GM12878 (cell line): ENCODE measurements at regions of chr5 and their contacts with region 1.

Region 1: GRCh38 chr5:141691867-141692532 is 10.0 kb upstream of the ARAP3 start:
- DNase-seq: no peak
- ATAC-seq: peak; percentile 97
- H3K4me3 ChIP-seq: no peak overlapping the region
- H3K27ac ChIP-seq: no peak overlapping the region
- H3K4me1 ChIP-seq: peaks cover 6% of the 10 kb centered on the region
- H3K27me3 ChIP-seq: peaks cover 0 to 5% of the 10 kb centered on the region in 2 experiments; a peak in 3 of 4 replicates
- CTCF ChIP-seq: peak; percentile 96 to 98 (median 97)
- EP300 ChIP-seq: no peak
- POLR2A ChIP-seq: no peak
- RAD21 ChIP-seq: peak; percentile 86

Region 2: GRCh38 chr5:141001854-141002604 is 690.0 kb before region 1 on chr5:
- CTCF ChIA-PET with region 1: no interaction called
- POLR2A ChIA-PET with region 1: no interaction called
- RAD21 ChIA-PET with region 1: no interaction called
- SMC1A ChIA-PET with region 1: no interaction called
- in situ Hi-C with region 1: no loop called
- intact Hi-C with region 1: no loop called
- DNase-seq: no peak
- ATAC-seq: no peak
- H3K4me3 ChIP-seq: no peak overlapping the region
- H3K27ac ChIP-seq: no peak overlapping the region
- H3K4me1 ChIP-seq: no peaks in the 10 kb centered on the region
- H3K27me3 ChIP-seq: no peaks in the 10 kb centered on the region
- CTCF ChIP-seq: no peak
- EP300 ChIP-seq: no peak
- POLR2A ChIP-seq: no peak
- RAD21 ChIP-seq: no peak

Region 3: DNA sequence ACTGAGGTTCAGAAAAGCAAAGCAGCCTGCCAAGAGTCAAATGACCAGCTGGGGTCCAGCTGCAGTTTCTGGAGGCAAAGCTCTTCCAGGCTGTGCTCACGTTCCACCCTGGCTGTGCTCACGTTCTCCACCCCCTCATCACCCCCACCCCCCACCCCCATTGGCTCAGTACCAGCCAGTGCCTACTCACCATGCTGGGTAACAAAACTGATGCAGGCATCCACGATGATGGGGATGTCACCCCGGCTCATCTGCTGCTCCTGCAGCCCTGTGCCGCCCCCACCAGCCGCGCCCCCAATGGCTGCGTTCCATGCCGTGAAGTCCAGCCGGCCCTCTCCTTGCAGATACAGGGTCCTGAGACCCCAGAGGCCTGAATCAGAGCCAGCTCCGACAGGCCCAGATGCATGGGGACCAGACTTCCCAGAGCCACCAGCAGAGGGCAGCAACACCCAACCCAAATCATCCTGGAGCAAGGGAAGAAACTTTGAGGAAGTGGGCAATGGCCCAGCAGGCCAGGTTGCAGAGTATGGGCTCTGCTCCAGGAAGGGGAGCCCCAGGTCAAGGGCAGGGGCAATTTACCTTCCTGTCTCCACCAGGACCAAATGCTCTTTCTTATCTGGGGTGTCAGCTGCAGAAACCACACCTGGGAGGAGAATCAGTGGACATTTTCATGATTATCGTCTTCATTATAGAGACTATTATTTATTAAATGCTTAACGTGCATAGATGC is 27.1 kb before region 1 on chr5:
- CTCF ChIA-PET with region 1: interaction called, 22 read pairs
- POLR2A ChIA-PET with region 1: no interaction called
- RAD21 ChIA-PET with region 1: interaction called, 5 read pairs
- SMC1A ChIA-PET with region 1: interaction called, 7 read pairs
- in situ Hi-C with region 1: no loop called
- intact Hi-C with region 1: no loop called
- DNase-seq: peak; percentile 31
- ATAC-seq: peak; percentile 100
- H3K4me3 ChIP-seq: no peak overlapping the region
- H3K27ac ChIP-seq: no peak overlapping the region
- H3K4me1 ChIP-seq: no peaks in the 10 kb centered on the region
- H3K27me3 ChIP-seq: no peaks in the 10 kb centered on the region
- CTCF ChIP-seq: peak; percentile 92 to 96 (median 94)
- EP300 ChIP-seq: no peak
- POLR2A ChIP-seq: no peak
- RAD21 ChIP-seq: peak; percentile 84

Region 4: DNA sequence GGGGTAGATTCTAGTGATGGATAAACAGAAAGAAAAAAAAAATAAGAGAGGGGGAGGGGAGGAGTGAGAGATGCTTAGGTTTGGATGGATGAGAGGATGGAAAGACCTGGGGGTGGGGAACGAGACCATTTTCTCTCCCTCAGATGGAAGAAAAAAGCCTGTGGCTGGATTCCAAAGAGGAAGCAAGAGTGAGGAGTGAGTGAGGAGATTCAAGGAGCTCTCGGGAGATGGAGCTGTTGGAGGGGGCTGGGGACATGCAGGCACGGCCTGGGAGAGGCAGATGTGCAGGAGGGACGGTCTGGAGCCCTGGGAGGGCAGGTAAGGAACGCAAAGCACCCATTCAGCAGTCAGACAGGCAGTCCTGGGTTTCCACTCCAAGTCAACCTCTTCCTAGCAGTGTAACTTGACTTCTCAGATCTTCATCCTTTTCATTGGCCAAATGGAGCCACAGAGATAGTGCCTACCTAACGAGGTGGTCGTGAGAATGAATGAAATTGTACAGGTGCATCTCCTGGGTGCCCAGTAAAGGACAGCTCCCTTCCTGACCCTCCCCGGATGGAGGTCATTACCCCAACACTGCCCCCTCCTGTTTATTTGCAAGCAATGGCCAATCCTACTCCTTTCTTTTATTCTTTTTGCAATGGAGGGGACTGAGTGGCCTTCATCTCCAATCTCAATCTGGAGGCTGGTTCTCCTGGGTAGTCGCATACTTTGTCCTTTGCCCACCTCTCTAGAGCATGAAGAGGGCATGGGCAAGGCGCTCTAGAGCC is 134.0 kb after region 1 on chr5:
- CTCF ChIA-PET with region 1: interaction called, 19 read pairs
- POLR2A ChIA-PET with region 1: no interaction called
- RAD21 ChIA-PET with region 1: interaction called, 4 read pairs
- SMC1A ChIA-PET with region 1: interaction called, 4 read pairs
- in situ Hi-C with region 1: no loop called
- intact Hi-C with region 1: loop called (anchors 2 kb)
- DNase-seq: no peak
- ATAC-seq: peak; percentile 80
- H3K4me3 ChIP-seq: no peak overlapping the region
- H3K27ac ChIP-seq: no peak overlapping the region
- H3K4me1 ChIP-seq: no peaks in the 10 kb centered on the region
- H3K27me3 ChIP-seq: peaks cover 0 to 3% of the 10 kb centered on the region in 2 experiments; a peak in 3 of 4 replicates
- CTCF ChIP-seq: peak; percentile 38 to 49 (median 43); a peak in 5 of 6 replicates
- EP300 ChIP-seq: no peak
- POLR2A ChIP-seq: no peak
- RAD21 ChIP-seq: peak; percentile 35

Region 5: GRCh38 chr5:141889282-141889871 is 197.4 kb after region 1 on chr5:
- CTCF ChIA-PET with region 1: interaction called, 27 read pairs
- POLR2A ChIA-PET with region 1: interaction called, 5 read pairs
- RAD21 ChIA-PET with region 1: interaction called, 7 read pairs
- SMC1A ChIA-PET with region 1: interaction called, 3 read pairs
- in situ Hi-C with region 1: loop called (anchors 5 kb)
- intact Hi-C with region 1: no loop called
- DNase-seq: no peak
- ATAC-seq: peak; percentile 64
- H3K4me3 ChIP-seq: no peak overlapping the region
- H3K27ac ChIP-seq: no peak overlapping the region
- H3K4me1 ChIP-seq: no peaks in the 10 kb centered on the region
- H3K27me3 ChIP-seq: no peaks in the 10 kb centered on the region; a peak in 1 of 4 replicates
- CTCF ChIP-seq: peak; percentile 32 to 49 (median 33); a peak in 4 of 6 replicates
- EP300 ChIP-seq: no peak
- POLR2A ChIP-seq: no peak
- RAD21 ChIP-seq: peak; percentile 46

Region 6: DNA sequence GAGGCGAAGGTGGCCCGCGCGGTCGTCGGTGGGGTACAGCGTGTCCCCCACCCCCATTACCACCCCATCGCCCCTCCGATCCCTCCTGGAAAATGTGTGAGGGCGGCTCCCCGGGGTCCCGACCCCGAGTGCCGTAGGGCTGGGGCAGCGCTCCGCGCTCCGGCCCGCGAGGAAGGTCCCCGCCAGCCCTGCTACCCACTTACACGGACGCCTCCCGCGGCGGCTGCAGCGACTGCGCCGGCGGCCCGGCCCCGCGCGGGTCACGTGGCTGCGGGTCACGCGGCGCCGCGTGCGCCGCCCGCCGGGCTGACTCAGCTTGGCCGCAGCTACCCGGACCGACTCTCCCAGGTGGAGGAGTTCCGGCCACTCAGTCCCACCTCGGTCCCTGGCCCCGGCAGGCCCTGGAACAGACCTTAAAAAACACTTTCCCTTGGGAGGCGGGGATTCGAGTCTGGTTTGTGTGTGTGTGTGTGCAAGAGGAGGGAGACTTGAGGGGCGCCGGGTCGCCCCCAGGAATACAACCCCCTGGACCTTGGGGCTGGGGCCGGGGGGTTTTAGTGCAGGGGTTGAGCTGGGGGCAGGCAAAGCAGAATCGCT is 320.9 kb after region 1 on chr5 and contains the start of gene GNPDA1:
- CTCF ChIA-PET with region 1: interaction called, 18 read pairs
- POLR2A ChIA-PET with region 1: no interaction called
- RAD21 ChIA-PET with region 1: interaction called, 9 read pairs
- SMC1A ChIA-PET with region 1: no interaction called
- in situ Hi-C with region 1: no loop called
- intact Hi-C with region 1: loop called (anchors 1 kb)
- DNase-seq: no peak
- ATAC-seq: peak; percentile 82
- H3K4me3 ChIP-seq: peak within 1 kb of the TSS; percentile 66
- H3K27ac ChIP-seq: no peak within 1 kb of the TSS
- H3K4me1 ChIP-seq: peaks cover 18% of the 10 kb centered on the region
- H3K27me3 ChIP-seq: peaks cover 0 to 2% of the 10 kb centered on the region in 2 experiments; a peak in 1 of 4 replicates
- CTCF ChIP-seq: no peak; a peak in 1 of 6 replicates
- EP300 ChIP-seq: no peak
- POLR2A ChIP-seq: peak; percentile 74
- RAD21 ChIP-seq: no peak
- polyA plus RNA-seq, gene GNPDA1: 5.8 to 11.9 TPM

Region 7: GRCh38 chr5:142151436-142152383 is 459.7 kb after region 1 on chr5:
- CTCF ChIA-PET with region 1: interaction called, 11 read pairs
- POLR2A ChIA-PET with region 1: no interaction called
- RAD21 ChIA-PET with region 1: interaction called, 4 read pairs
- SMC1A ChIA-PET with region 1: interaction called, 4 read pairs
- in situ Hi-C with region 1: loop called (anchors 10 kb)
- intact Hi-C with region 1: no loop called
- DNase-seq: peak; percentile 2
- ATAC-seq: peak; percentile 72
- H3K4me3 ChIP-seq: no peak overlapping the region
- H3K27ac ChIP-seq: no peak overlapping the region
- H3K4me1 ChIP-seq: no peaks in the 10 kb centered on the region
- H3K27me3 ChIP-seq: no peaks in the 10 kb centered on the region
- CTCF ChIP-seq: peak; percentile 61 to 85 (median 75); a peak in 5 of 6 replicates
- EP300 ChIP-seq: no peak
- POLR2A ChIP-seq: no peak
- RAD21 ChIP-seq: peak; percentile 82